ENCODE measurements at regions of chr3 and their contacts with region 1.

Region 1: DNA sequence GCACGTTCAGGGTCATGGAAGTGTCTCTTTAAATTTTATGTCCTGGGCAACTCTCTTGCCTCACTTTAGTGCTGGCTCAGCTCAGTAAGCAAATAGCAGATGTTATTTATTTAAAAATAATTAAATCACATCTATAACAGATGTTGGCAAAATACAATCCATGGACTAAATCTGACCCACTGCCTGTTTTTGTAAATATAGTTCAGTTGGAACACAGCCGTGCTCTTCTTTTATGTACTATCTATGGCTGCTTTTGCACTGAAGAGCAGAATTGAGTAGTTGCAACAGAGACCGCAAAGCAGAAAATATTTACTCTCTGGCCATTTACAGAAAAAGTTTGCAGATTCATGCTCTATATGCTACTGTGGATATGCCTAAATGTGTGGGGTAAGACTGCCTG is 79.2 kb downstream of the SAMMSON start:
- DNase-seq: no peak
- H3K4me3 ChIP-seq: no peak overlapping the region
- H3K27ac ChIP-seq: no peak overlapping the region
- H3K4me1 ChIP-seq: peaks cover 0 to 2% (median 0%) of the 10 kb centered on the region in 4 experiments; a peak in 1 of 7 replicates
- H3K27me3 ChIP-seq: no peaks in the 10 kb centered on the region
- CTCF ChIP-seq: no peak
- EP300 ChIP-seq: no peak
- POLR2A ChIP-seq: no peak
- RAD21 ChIP-seq: no peak

Region 2: DNA sequence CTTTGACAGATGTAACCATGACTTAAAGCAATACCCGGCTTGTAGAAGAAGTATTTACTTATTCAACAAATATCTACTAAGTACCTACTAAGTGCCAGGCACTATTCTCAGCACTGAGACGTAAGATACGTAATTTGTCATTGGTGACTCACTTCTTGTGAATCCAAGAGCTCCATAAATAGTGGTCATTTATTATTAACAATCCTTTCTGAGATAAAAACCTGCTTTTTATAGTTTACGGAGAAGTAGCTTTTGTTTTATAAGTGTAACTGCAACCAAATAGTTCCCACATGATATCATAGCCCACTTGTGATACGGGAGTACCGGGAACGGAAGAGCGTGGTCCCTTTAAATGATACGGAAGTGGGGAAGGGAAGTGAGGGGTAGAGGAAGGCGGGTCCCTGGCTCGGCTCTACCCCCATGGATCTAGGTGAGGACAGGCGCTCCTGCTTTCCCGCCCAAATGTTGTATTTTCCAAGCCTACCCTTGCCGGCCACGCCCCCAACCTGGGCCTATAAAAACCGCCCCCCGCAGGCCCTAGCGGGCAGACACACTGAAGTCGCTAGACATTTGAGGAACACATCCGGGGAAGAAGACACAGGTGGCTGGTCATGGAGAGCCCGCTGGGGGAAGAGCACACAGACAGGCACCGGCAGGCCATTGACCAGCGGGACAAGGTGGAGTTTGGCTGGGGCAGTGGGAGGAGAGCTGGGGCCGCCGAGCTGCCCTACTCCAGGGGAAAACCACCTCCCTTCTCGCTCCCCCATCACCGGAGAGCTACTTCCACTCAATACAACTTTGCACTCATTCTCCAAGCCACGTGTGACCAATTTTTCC is 79.4 kb before region 1 on chr3 and contains the start of gene SAMMSON:
- CTCF ChIA-PET with region 1: no interaction called
- POLR2A ChIA-PET with region 1: no interaction called
- DNase-seq: peak in 1 of 2 experiments; percentile 55
- H3K4me3 ChIP-seq: no peak within 1 kb of the TSS
- H3K27ac ChIP-seq: no peak within 1 kb of the TSS
- H3K4me1 ChIP-seq: peaks cover 0 to 3% (median 0%) of the 10 kb centered on the region in 4 experiments; a peak in 1 of 7 replicates
- H3K27me3 ChIP-seq: no peaks in the 10 kb centered on the region
- CTCF ChIP-seq: no peak
- EP300 ChIP-seq: no peak
- POLR2A ChIP-seq: no peak
- RAD21 ChIP-seq: no peak
- total RNA-seq, gene SAMMSON: not detected in 2 replicates

Region 3: GRCh38 chr3:70020906-70021660 is 57.7 kb before region 1 on chr3:
- CTCF ChIA-PET with region 1: no interaction called
- POLR2A ChIA-PET with region 1: no interaction called
- DNase-seq: no peak
- H3K4me3 ChIP-seq: no peak overlapping the region
- H3K27ac ChIP-seq: no peak overlapping the region
- H3K4me1 ChIP-seq: no peaks in the 10 kb centered on the region
- H3K27me3 ChIP-seq: no peaks in the 10 kb centered on the region
- CTCF ChIP-seq: no peak
- EP300 ChIP-seq: no peak
- POLR2A ChIP-seq: no peak
- RAD21 ChIP-seq: no peak

Region 4: DNA sequence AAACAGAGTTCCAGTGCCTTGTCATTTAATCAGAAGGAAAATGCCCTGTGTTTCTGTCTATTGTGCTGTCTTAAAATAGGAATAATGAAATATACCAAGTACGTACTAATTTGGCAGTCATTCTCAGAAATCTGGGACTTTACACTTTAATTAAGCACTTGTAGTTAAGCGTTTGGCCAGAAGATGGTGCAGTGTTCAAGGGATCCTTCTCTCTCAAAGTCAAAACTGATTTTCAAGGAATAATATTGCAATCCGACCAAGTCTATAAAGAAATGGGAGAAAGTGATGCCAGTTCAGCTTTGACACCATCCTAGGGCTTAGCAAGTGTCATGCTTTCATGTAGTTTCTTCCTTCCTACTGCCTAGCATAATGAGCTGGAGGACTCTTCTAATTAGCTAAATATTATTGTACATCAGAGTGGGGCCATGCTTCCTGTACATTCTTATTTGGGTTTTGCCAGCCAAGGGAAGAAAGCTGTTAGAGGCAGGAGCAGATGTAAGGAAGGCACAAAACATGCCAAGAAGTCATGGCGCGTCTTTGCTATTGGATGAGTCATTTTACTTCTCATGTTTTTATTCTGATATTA is 14.5 kb before region 1 on chr3:
- CTCF ChIA-PET with region 1: interaction called, 11 read pairs
- POLR2A ChIA-PET with region 1: no interaction called
- DNase-seq: no peak
- H3K4me3 ChIP-seq: no peak overlapping the region
- H3K27ac ChIP-seq: no peak overlapping the region
- H3K4me1 ChIP-seq: no peaks in the 10 kb centered on the region
- H3K27me3 ChIP-seq: no peaks in the 10 kb centered on the region
- CTCF ChIP-seq: peak in 2 of 3 experiments; percentile 51 to 72; a peak in 2 of 4 replicates
- EP300 ChIP-seq: no peak
- POLR2A ChIP-seq: no peak
- RAD21 ChIP-seq: peak; percentile 83 to 85

Measured in H1 (cell line).